ENCODE measurements at regions of chr1 and their contacts with region 1.

Region 1: DNA sequence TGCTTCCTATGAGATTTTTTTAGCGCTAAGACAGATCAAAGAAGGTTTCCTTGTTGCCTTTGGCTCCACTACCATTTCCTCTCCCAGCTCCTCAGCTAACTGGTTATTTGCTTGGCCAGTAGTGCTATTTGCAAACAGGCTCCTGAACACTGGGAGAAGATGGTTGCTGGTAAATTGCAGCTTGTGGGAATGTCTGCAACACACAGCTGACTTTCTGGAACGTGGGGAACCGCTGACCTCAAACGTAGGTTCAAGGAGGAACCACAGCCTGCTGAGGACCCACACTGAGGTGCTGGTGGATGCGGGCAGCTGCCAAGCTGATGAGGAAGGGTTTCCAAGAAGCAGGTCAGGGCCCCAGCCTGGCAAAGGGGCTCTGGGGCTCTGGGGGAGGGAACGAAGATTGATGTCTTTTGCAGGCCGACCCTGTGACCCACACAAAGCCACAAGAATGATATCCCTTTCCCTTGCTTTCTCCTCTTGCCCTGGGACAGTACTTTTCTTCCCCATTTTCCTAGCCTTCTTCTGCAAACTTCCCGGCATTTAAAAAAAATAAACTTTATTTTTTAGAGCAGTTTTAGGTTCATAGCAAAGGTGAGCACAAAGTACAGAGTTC is 24.8 kb downstream of the GNG4 start:
- DNase-seq: no peak

Region 2: DNA sequence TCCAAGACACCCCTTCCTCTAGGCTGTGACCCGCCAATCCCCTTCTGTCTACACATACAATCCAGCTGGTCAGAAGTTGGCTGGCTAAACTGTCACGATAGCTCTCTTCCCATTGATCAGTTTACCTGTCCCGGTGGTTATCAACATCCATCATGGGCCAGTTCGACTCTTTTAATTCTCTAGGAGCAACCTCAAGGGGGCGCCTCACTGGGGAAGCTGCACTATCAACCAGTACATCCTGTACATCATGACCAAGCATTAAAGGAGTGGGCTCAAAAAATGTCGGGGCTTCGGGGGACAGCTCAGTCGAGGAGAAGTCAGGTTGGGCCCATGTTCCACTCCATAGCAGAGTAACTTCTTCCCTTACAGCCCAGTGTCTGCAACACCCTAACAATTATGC is 67.3 kb before region 1 on chr1:
- intact Hi-C with region 1: loop called in 1 of 2 experiments (anchors 2 kb)
- DNase-seq: no peak

Region 3: DNA sequence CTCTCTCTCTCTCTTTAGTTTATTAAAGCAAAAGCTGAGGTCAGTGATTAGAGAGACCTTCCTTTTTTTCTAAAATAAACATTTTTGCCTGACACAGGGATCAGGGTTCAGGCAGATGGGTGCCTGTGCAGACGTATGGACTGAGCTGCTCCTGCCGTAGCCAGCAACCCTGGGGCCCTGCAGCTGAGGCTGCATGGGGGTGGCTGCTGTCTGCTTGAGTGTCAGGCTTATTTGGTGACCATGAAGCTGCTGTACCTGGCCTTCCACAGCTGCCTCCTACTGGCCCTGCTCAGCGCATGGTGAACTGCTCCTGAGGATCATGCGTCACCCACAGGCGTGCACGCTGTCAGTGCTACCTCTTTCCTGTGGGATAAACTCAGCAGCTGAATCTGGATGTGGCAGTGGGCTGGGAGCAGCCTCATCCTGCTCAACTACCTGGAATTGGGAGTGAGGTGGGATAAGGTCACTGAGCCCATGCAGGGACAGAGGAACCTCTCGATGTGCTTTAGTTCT is 10.3 kb before region 1 on chr1:
- intact Hi-C with region 1: no loop called
- DNase-seq: no peak

Region 4: DNA sequence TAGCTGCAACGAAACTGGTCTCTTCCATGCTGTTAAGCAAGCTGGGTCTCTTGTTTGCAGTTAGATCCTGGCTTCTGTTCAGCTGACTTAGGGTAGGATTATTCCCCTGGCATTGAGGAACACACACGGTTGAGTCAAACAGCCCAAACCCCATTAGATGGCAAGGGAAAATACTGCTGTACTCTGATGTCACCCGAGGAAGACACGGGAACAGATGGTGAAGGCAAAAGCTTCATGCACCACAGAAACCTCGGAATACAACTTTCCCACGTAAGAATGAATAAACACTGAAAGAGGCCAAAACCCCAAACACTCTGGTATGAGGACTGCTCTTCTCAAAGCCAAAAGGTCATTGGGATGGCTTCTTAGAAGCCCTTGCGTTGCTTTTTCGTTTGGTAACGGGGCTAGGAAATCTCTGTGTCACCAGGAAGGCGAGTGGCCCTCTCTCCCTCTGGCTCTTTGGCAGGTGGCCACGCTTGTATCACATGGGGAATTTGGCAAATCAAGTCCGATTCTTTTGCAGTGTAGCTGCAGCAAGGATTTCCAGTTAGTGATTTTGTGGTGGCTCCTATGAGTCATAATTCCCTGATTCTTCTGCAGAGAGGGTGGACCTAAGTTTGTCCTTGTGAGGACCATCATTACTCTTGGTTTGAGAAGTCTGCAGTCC is 258.6 kb after region 1 on chr1:
- intact Hi-C with region 1: no loop called
- DNase-seq: peak; percentile 97

Measured in posterior vena cava (tissue), 2 donors.